Thyroid gland (tissue), 4 donors: ENCODE measurements at regions of chr1 and their contacts with region 1.

Region 1: DNA sequence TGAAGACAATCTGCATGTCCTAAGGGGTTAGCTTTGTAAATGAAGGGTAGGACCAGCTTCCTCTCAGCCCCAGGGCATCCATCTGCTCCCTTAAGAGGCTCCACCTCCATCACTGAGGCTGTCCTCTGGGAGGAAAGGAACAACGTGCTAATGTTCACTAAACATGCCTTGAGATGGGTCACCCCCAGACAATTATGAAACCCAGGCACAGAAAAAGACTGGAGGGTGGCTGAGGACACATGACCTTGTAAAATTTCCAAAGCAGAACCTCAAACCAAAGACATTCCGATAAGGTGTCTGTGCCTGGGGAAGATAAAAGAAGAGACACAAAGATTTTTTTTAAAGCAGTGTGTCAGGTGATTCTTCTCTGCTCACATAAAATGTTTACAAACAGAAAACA is 37.6 kb upstream of the ZNF124 start:
- DNase-seq: no peak
- H3K4me3 ChIP-seq: peak overlapping the region in 1 of 3 donors; percentile 97
- H3K27ac ChIP-seq: no peak overlapping the region
- H3K4me1 ChIP-seq: peaks cover 9 to 22% of the 10 kb centered on the region in 2 donors
- H3K27me3 ChIP-seq: no peaks in the 10 kb centered on the region
- CTCF ChIP-seq: no peak
- POLR2A ChIP-seq: no peak

Region 2: GRCh38 chr1:246280551-246280950 is 928.8 kb before region 1 on chr1:
- intact Hi-C with region 1: no loop called
- DNase-seq: no peak
- H3K4me3 ChIP-seq: no peak overlapping the region
- H3K27ac ChIP-seq: no peak overlapping the region
- H3K4me1 ChIP-seq: no peaks in the 10 kb centered on the region
- H3K27me3 ChIP-seq: no peaks in the 10 kb centered on the region
- CTCF ChIP-seq: peak in 2 of 6 experiments; percentile 30 to 35
- POLR2A ChIP-seq: no peak

Region 3: GRCh38 chr1:247331172-247331991 is 122.0 kb after region 1 on chr1 and contains the start of gene ZNF496:
- intact Hi-C with region 1: loop called (anchors 10 kb)
- DNase-seq: peak; percentile 85 to 86
- H3K4me3 ChIP-seq: peak within 1 kb of the TSS; percentile 54 to 95 (median 89)
- H3K27ac ChIP-seq: peak within 1 kb of the TSS; percentile 87 to 93 (median 92)
- H3K4me1 ChIP-seq: peaks cover 14 to 29% of the 10 kb centered on the region in 2 donors
- H3K27me3 ChIP-seq: no peaks in the 10 kb centered on the region
- CTCF ChIP-seq: no peak
- POLR2A ChIP-seq: peak in 1 of 2 donors; percentile 84
- total RNA-seq, gene ZNF496: 34.0 to 78.6 (median 51.9) TPM